MCF 10A (cell line): ENCODE measurements at regions of chr5 and their contacts with region 1.

Region 1: GRCh38 chr5:147558826-147559225 is 49.0 kb upstream of the DPYSL3 start:
- DNase-seq: peak; percentile 74
- H3K4me3 Mint-ChIP-seq: no peak overlapping the region
- H3K27ac Mint-ChIP-seq: no peak overlapping the region
- H3K4me1 Mint-ChIP-seq: peaks cover 5% of the 10 kb centered on the region
- H3K27me3 Mint-ChIP-seq: no peaks in the 10 kb centered on the region
- CTCF ChIP-seq: peak; percentile 81

Region 2: DNA sequence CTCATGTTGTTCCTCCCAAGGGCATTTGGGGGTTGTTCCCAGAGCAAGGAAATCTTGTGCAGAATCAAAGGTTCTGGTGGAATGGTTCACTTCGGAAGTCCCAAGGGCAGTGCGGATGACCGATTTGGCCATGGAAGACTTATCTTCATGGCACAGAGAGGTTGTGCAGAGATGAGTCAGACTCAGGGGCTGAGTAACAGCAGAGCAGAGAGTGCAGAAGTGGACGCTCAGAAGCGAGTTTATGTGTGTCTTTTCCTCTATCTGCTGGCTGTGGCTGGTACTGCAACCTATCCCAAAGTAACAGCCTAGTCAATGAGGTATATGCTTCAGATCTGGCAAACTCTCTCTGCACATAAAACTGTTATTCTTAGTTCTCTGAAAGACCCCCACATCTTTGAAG is 167.0 kb before region 1 on chr5:
- CTCF ChIA-PET with region 1: interaction called, 4 read pairs
- POLR2A ChIA-PET with region 1: no interaction called
- intact Hi-C with region 1: loop called (anchors 1 kb)
- DNase-seq: peak; percentile 89
- H3K4me3 Mint-ChIP-seq: no peak overlapping the region
- H3K27ac Mint-ChIP-seq: no peak overlapping the region
- H3K4me1 Mint-ChIP-seq: no peaks in the 10 kb centered on the region
- H3K27me3 Mint-ChIP-seq: no peaks in the 10 kb centered on the region
- CTCF ChIP-seq: peak; percentile 87

Region 3: DNA sequence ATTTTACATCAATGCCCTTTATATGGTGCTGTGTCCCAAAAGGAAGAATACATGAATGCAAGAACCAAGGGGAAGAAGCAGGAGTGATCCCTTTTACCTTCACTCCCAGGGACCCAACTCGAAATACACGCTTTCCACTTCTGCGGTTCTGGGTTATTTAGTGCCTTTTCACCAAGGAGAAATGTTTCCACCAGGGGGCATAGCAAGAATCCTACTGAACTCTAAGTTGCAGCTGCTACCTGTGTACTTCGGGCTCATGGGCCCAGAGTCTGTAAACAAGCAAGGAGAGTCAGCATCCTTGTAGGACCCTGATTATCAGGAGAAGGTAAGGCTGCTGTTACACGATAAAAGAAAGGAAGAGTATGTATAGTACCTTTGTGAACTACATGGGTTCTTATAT is 94.6 kb before region 1 on chr5:
- CTCF ChIA-PET with region 1: interaction called, 28 read pairs
- POLR2A ChIA-PET with region 1: no interaction called
- intact Hi-C with region 1: loop called (anchors 1 kb)
- DNase-seq: peak; percentile 68
- H3K4me3 Mint-ChIP-seq: no peak overlapping the region
- H3K27ac Mint-ChIP-seq: no peak overlapping the region
- H3K4me1 Mint-ChIP-seq: no peaks in the 10 kb centered on the region
- H3K27me3 Mint-ChIP-seq: no peaks in the 10 kb centered on the region
- CTCF ChIP-seq: peak; percentile 63

Region 4: GRCh38 chr5:147509710-147510651 is 48.8 kb before region 1 on chr5 and contains the start of gene DPYSL3:
- CTCF ChIA-PET with region 1: interaction called, 6 read pairs
- POLR2A ChIA-PET with region 1: interaction called, 3 read pairs
- intact Hi-C with region 1: loop called (anchors 5 kb)
- DNase-seq: peak; percentile 69
- H3K4me3 Mint-ChIP-seq: peak within 1 kb of the TSS; percentile 73
- H3K27ac Mint-ChIP-seq: peak within 1 kb of the TSS; percentile 21
- H3K4me1 Mint-ChIP-seq: peaks cover 14% of the 10 kb centered on the region
- H3K27me3 Mint-ChIP-seq: peaks cover 32% of the 10 kb centered on the region
- CTCF ChIP-seq: peak; percentile 25
- total RNA-seq, gene DPYSL3: 8.2 and 8.9 TPM in 2 replicates